ENCODE measurements at regions of chr3 and their contacts with region 1.

Region 1: DNA sequence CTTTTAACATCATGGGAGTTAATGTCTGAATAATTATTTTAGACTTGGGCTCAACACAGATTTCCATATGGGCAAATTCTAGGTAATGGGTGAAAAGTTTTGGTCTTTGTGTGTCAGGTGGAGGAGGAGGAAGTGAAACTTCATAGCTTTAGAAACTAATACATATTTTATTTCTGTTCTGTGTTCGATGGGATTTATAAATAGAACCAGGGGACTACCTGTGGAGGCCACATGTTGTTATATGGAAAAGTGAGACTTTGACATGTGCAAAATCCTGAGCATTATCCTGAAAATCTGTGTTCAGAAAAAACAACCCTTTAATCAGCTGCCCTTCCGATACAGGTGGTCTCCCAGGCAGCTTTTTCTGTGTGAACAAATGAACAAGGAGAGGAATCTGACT is 209.5 kb downstream of the SOX2 start:
- DNase-seq: no peak
- H3K4me3 ChIP-seq: no peak overlapping the region
- CTCF ChIP-seq: no peak

Region 2: DNA sequence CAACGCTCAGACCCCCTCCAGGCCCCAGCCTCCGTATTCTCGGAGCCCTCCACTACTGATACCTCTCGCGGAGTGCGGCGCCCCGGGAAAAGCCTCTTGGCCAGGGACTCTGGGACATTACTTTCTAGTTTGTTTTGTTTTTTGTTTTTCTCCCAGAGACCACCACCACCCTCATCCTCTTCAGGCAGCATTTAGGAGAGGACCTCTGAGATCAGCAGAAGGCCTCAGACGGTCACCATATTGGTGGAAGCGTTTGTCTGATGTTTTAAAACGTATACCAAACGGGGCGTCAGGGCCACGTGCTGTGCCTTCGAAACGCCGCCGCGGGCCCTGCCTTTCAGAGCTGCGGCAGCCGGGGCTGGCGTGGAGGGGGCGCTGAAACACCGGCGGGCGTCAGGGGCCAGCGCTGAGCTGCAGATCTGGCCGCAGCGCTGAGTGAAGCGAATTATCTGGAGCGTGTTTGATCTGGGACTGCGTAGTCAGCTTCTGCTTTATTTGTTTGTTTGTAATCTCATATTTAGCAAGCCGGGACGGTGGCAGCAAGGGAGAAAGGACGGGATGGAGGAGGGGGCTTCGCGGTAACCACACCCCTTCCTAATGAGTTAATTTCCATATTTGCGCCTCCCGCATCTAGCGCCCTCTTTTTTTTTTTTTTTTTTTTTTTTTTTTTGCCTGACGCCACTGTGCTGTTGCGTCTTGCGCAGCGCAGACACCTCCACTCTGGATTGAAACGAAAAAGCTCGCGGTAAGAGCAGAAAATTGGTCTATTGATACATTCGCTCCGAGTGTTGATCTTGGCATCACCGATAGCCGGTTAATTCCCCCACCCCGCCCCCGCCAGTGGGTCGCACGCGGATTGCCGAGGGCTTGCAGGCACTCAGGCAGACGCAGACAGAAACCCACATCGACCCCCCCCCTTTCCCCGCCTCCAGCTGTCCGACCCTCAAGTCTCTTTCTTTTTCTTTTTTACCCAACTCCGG is 194.6 kb before region 1 on chr3:
- in situ Hi-C with region 1: loop called (anchors 25 kb)
- DNase-seq: no peak
- H3K4me3 ChIP-seq: peak overlapping the region; percentile 44
- CTCF ChIP-seq: peak; percentile 40